Right lobe of liver (tissue), 6 donors: ENCODE measurements at regions of chr14 and their contacts with region 1.

Region 1: GRCh38 chr14:100850841-100851585 is 25.1 kb downstream of the MEG3 start:
- DNase-seq: peak; percentile 81 to 85 (median 82)
- ATAC-seq: peak; percentile 95 to 97 (median 96)
- H3K4me3 ChIP-seq: no peak overlapping the region
- H3K27ac ChIP-seq: no peak overlapping the region
- H3K4me1 ChIP-seq: no peaks in the 10 kb centered on the region
- H3K27me3 ChIP-seq: no peaks in the 10 kb centered on the region
- CTCF ChIP-seq: peak; percentile 86 to 96 (median 92)
- POLR2A ChIP-seq: no peak

Region 2: DNA sequence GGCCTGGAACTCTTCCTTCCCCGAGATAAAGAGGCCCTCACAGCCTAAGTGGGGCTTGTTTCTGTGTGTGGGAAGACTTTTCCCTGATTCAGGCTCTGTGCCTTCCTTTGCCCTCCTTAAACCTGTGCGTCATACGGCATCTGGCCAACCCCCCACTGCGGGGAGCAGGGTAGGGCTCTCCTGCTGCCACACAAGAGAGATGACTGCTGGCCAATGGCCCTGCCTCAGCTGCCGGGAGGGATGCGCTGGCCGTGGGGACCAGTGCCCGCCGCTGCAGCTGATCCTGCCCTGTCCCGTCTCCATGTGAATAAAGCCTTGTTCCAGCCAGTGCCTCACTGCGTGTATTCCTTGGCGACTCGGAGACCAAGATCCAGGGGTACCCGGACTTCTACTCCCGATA is 221.3 kb before region 1 on chr14:
- intact Hi-C with region 1: no loop called
- DNase-seq: no peak
- ATAC-seq: no peak
- H3K4me3 ChIP-seq: no peak overlapping the region
- H3K27ac ChIP-seq: no peak overlapping the region
- H3K4me1 ChIP-seq: no peaks in the 10 kb centered on the region
- H3K27me3 ChIP-seq: no peaks in the 10 kb centered on the region
- CTCF ChIP-seq: no peak
- POLR2A ChIP-seq: no peak

Region 3: DNA sequence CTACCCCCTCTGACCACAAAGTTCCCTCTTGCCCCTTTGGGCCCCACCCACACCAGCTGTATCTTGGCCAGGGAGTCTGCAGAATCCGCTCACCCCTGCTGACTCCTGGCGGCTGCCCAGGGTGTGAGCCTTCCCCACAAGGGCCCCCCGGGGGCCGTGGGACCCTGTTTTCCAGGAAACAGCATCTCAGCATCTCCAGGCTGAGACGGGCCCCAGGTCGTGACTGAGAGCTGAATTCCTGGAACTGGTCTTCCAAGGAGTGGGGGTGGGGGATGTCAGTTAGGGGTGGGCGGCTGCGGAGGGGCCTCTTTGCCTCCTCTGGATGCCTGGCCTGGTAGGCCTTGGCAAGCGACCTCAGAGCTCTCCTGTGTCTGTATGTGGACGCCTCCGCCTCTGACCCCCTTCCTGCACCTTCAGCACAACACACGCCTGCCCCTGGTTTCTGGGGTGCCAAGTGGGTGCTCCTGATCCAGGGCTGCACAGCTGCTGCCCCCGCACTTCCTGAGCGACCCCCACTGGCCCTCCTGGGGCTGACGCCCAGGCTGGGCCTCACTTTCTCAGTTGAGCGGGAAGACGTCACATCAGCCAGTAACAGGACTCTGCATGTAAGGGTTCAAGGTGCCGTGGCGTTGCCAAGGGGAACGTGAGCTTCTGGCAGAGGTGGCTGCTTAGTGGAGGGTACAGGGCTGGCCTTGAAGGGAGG is 374.6 kb after region 1 on chr14:
- intact Hi-C with region 1: loop called in 1 of 2 experiments (anchors 10 kb)
- DNase-seq: peak in 2 of 3 donors; percentile 42 to 48
- ATAC-seq: no peak
- H3K4me3 ChIP-seq: no peak overlapping the region
- H3K27ac ChIP-seq: no peak overlapping the region
- H3K4me1 ChIP-seq: peaks cover 0 to 9% (median 2%) of the 10 kb centered on the region in 4 donors
- H3K27me3 ChIP-seq: no peaks in the 10 kb centered on the region
- CTCF ChIP-seq: no peak
- POLR2A ChIP-seq: no peak

Region 4: DNA sequence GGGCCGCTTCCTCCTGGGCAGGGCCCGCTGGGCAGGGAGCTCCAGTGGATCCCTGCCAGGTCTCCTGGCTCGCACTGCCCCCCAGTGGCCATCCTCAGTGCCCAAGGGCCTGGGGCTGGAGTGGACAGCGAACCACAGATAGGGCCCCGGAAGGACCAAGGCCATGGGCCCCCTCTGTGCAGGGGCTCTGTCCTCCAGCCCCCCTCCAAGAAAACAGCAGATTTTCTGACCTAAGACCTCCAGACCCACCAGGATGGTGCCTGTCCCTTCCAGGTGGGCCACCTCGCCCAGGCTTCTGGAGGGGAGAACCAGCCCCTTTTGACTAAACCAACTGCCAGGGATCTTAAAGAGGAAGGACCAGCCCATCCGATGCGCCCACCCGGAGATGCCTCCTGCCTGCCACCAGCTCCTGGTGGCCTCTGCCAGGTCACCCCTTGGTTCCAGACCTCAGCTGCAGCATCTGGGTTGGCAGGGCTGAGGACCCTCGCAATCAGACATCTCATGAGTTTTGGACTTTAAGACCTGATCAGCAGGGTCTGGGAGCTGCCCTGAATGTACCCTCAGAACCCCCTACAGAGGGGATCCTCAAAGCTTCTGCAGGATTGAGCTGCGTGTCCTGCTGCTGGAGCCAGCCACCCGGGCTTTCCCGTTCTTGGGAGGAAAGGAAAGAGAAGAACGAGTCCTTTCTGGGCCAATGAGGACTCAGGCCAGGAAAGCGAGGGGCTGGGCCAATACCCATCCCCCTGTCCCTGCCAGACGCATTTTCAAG is 384.5 kb after region 1 on chr14:
- intact Hi-C with region 1: loop called in 1 of 2 experiments (anchors 5 kb)
- DNase-seq: peak; percentile 72 to 78 (median 78)
- ATAC-seq: peak; percentile 88 to 96 (median 92)
- H3K4me3 ChIP-seq: no peak overlapping the region
- H3K27ac ChIP-seq: no peak overlapping the region
- H3K4me1 ChIP-seq: no peaks in the 10 kb centered on the region
- H3K27me3 ChIP-seq: no peaks in the 10 kb centered on the region
- CTCF ChIP-seq: peak; percentile 71 to 91 (median 85)
- POLR2A ChIP-seq: no peak

Region 5: GRCh38 chr14:101628471-101628966 is 777.5 kb after region 1 on chr14:
- intact Hi-C with region 1: loop called (anchors 5 to 10 kb)
- DNase-seq: peak; percentile 77 to 79 (median 78)
- ATAC-seq: peak; percentile 93 to 99 (median 98)
- H3K4me3 ChIP-seq: peak overlapping the region in 1 of 3 donors; percentile 27
- H3K27ac ChIP-seq: no peak overlapping the region
- H3K4me1 ChIP-seq: peaks cover 0 to 7% (median 0%) of the 10 kb centered on the region in 4 donors
- H3K27me3 ChIP-seq: no peaks in the 10 kb centered on the region
- CTCF ChIP-seq: peak; percentile 98 to 100 (median 99)
- POLR2A ChIP-seq: no peak